Naive thymus-derived CD4-positive, alpha-beta T cell (primary cell): ENCODE measurements at regions of chr1 and their contacts with region 1.

Region 1: DNA sequence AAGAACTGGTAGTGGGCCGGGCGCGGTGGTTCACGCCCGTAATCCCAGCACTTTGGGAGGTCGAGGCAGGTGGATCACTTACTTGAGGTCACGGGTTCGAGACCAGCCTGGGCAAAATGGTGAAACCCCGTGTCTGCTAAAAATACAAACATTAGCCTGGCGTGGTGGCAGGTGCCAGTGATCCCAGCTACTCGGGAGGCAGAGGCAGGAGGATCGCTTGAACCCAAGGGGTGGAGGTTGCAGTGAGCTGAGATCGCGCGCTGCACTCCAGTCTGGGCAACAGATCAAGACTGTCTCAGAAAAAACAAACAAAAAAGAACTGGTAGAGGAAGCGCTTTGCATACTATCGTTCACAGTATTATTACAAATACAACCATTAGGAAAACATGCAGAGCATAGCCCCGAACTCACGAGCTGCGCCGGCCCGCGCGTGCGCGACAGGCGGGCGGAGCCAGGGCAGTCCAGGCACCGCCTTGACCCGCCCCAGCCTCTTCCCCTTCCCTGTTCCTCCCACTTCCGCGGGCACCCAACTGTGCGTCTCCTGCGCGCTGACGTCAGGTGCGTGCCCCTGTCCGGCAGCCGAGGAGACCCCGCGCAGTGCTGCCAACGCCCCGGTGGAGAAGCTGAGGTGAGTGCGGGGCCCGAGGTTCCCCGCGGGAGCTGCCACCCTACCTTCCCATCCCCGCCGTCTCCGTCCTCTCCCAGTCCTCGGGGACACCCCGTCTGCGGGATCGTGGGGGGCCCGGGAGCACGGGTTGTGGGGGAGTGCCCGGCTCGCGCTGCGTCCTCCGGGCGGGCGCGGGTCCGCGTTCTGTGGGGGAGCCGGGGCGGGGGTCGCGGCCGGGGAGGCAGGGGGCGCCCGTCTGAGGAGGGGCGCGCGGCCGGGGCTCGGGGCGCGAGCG is at the start of gene CDC42:
- DNase-seq: peak; percentile 95 to 99 (median 98)
- ATAC-seq: peak; percentile 96
- H3K4me3 ChIP-seq: peak within 1 kb of the TSS; percentile 74
- H3K4me3 Mint-ChIP-seq: peak within 1 kb of the TSS; percentile 96 to 100 (median 99)
- H3K27ac ChIP-seq: peak within 1 kb of the TSS; percentile 98
- H3K27ac Mint-ChIP-seq: peak within 1 kb of the TSS; percentile 91 to 100 (median 99)
- H3K4me1 ChIP-seq: peaks cover 38 to 45% of the 10 kb centered on the region in 2 donors
- H3K4me1 Mint-ChIP-seq: peaks cover 50 to 79% (median 61%) of the 10 kb centered on the region in 7 donors
- H3K27me3 ChIP-seq: no peaks in the 10 kb centered on the region
- H3K27me3 Mint-ChIP-seq: peaks cover 0 to 2% (median 0%) of the 10 kb centered on the region in 5 donors
- total RNA-seq, gene CDC42: 186 to 385 (median 305) TPM

Region 2: GRCh38 chr1:21801100-21801499 is 251.3 kb before region 1 on chr1:
- CTCF ChIA-PET with region 1: no interaction called
- POLR2A ChIA-PET with region 1: no interaction called
- intact Hi-C with region 1: no loop called
- DNase-seq: no peak
- ATAC-seq: no peak
- H3K4me3 ChIP-seq: no peak overlapping the region
- H3K4me3 Mint-ChIP-seq: no peak overlapping the region
- H3K27ac ChIP-seq: no peak overlapping the region
- H3K27ac Mint-ChIP-seq: no peak overlapping the region
- H3K4me1 ChIP-seq: no peaks in the 10 kb centered on the region
- H3K4me1 Mint-ChIP-seq: no peaks in the 10 kb centered on the region
- H3K27me3 ChIP-seq: no peaks in the 10 kb centered on the region
- H3K27me3 Mint-ChIP-seq: peaks cover 0 to 3% (median 0%) of the 10 kb centered on the region in 5 donors

Region 3: DNA sequence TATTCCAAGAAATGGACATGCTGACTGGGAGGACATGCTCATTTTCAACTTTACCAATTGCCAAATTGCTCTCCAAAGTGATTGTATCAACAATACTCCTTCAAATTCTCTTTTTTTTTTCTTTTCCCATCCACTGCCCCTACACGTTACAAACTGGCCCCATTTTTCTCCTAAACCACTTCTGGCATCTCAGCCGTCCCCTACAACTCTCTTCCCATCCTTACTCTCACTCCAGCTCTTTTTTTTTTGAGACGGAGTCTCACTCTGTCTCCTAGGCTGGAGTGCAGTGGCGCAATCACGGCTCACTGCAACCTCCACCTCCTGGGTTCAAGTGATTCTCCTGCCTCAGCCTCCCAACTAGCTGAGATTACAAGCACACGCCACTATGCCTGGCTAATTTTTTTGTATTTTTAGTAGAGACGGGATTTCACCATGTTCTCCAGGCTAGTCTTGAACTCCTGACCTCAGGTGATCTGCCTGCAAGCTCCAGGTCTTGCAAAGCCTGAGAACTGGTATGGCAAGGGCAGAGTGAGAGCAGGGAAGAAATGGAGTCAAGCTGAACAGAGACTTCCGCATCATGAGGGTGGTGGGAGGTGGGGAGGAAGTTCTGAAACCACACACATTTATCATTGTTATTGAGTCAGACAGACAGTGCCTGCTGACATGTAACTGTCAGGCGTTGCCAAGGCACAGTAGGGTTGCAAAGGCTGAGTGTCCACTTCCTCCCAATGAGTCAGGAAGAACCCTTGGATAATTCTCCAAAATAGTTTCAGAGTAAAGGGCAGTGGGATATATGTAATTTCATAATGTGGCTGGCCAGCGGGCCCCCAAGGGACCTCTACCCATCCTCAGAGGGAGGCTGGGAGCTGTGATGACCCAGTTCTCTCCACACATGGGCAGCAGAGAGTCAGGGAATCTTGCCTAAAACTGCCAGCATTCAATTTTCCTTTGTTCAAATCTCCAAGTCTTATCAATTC is 33.5 kb before region 1 on chr1:
- CTCF ChIA-PET with region 1: interaction called, 56 read pairs
- POLR2A ChIA-PET with region 1: interaction called, 774 read pairs
- intact Hi-C with region 1: loop called in 1 of 2 experiments (anchors 1 kb)
- DNase-seq: peak; percentile 31 to 86 (median 68)
- ATAC-seq: peak; percentile 96
- H3K4me3 ChIP-seq: no peak overlapping the region
- H3K4me3 Mint-ChIP-seq: peak overlapping the region; percentile 44 to 77 (median 66)
- H3K27ac ChIP-seq: peak overlapping the region; percentile 47
- H3K27ac Mint-ChIP-seq: peak overlapping the region; percentile 83 to 99 (median 95)
- H3K4me1 ChIP-seq: peaks cover 22 to 27% of the 10 kb centered on the region in 2 donors
- H3K4me1 Mint-ChIP-seq: peaks cover 20 to 32% (median 30%) of the 10 kb centered on the region in 7 donors
- H3K27me3 ChIP-seq: no peaks in the 10 kb centered on the region
- H3K27me3 Mint-ChIP-seq: peaks cover 0 to 3% (median 0%) of the 10 kb centered on the region in 5 donors

Region 4: DNA sequence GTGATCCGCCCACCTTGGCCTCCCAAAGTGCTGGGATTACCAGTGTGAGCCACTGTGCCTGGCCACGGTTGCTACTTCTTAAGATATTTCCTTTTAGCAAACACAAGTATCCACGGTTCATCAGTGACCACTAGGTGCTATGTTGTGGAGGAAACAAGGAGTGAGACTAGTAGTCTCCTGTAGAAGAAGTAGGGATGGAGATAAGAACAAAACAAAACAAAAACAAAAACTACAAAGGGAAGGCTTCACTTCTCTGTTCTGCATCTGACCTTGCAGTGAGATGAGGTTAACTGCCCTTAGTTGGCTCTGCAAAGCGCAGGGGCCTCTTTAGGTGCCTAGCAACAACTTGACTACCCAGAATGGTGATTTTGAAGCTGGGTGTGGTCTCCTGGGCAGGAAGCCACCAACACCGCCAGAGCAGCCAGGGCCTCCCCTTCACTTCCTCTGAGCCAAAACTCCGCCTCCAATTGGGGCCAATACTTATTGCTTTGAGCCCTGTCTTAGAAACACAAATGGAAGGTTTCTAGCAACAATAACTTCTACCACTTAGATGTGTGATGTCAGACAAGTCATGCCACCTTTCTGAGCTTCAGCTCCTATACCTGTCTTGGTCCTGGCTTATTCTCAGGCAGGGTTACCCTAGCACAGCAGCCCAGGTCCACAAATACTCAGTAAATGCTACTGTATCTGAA is 12.6 kb before region 1 on chr1:
- CTCF ChIA-PET with region 1: interaction called, 27 read pairs
- POLR2A ChIA-PET with region 1: interaction called, 774 read pairs
- intact Hi-C with region 1: loop called (anchors 1 kb)
- DNase-seq: peak; percentile 62 to 98 (median 97)
- ATAC-seq: peak; percentile 98
- H3K4me3 ChIP-seq: peak overlapping the region; percentile 25
- H3K4me3 Mint-ChIP-seq: peak overlapping the region; percentile 66 to 90 (median 81)
- H3K27ac ChIP-seq: peak overlapping the region; percentile 95
- H3K27ac Mint-ChIP-seq: peak overlapping the region; percentile 95 to 100 (median 99)
- H3K4me1 ChIP-seq: peaks cover 31 to 65% of the 10 kb centered on the region in 2 donors
- H3K4me1 Mint-ChIP-seq: peaks cover 35 to 77% (median 53%) of the 10 kb centered on the region in 7 donors
- H3K27me3 ChIP-seq: no peaks in the 10 kb centered on the region
- H3K27me3 Mint-ChIP-seq: no peaks in the 10 kb centered on the region

Region 5: DNA sequence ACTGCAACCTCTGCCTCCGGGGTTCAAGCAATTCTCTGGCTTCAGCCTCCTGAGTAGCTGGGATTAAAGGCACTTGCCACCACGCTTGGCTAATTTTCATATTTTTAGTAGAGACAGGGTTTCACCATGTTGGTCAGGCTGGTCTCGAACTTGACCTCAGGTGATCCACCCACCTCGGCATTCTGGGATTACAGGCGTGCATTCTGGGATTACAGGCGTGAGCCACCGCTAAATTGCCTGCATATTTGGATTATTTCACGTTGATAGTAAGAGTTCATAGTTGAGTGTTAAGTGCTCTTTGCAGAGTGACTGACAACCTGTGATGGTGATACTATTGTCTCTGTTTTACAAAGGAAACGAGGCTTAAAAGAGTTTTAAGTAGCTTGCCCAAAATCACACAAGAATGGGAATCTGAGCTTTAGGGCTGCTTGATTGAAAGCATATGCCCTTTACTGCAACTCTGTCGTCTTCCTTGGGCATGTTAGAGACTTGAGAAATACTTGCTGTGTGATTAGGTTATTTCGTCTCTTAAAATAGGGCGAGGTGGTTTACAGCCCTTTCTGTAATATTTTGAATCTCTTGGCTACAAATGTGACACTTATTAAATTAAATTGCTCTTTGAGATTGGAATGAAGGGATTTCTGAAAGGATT is 12.5 kb after region 1 on chr1:
- CTCF ChIA-PET with region 1: no interaction called
- POLR2A ChIA-PET with region 1: interaction called, 15 read pairs
- intact Hi-C with region 1: loop called in 1 of 2 experiments (anchors 2 kb)
- DNase-seq: no peak
- ATAC-seq: no peak
- H3K4me3 ChIP-seq: peak overlapping the region; percentile 11
- H3K4me3 Mint-ChIP-seq: peak overlapping the region in 9 of 10 donors; percentile 64 to 96 (median 74)
- H3K27ac ChIP-seq: peak overlapping the region; percentile 28
- H3K27ac Mint-ChIP-seq: peak overlapping the region in 7 of 9 donors; percentile 38 to 90 (median 64)
- H3K4me1 ChIP-seq: peaks cover 84 to 85% of the 10 kb centered on the region in 2 donors
- H3K4me1 Mint-ChIP-seq: peaks cover 72 to 93% (median 86%) of the 10 kb centered on the region in 7 donors
- H3K27me3 ChIP-seq: no peaks in the 10 kb centered on the region
- H3K27me3 Mint-ChIP-seq: no peaks in the 10 kb centered on the region

Region 6: GRCh38 chr1:22077728-22078127 is 25.4 kb after region 1 on chr1:
- CTCF ChIA-PET with region 1: no interaction called
- POLR2A ChIA-PET with region 1: interaction called, 28 read pairs
- intact Hi-C with region 1: no loop called
- DNase-seq: no peak
- ATAC-seq: no peak
- H3K4me3 ChIP-seq: no peak overlapping the region
- H3K4me3 Mint-ChIP-seq: peak overlapping the region in 8 of 10 donors; percentile 22 to 73 (median 64)
- H3K27ac ChIP-seq: peak overlapping the region; percentile 48
- H3K27ac Mint-ChIP-seq: peak overlapping the region in 8 of 9 donors; percentile 23 to 94 (median 74)
- H3K4me1 ChIP-seq: peaks cover 43 to 64% of the 10 kb centered on the region in 2 donors
- H3K4me1 Mint-ChIP-seq: peaks cover 69 to 99% (median 88%) of the 10 kb centered on the region in 7 donors
- H3K27me3 ChIP-seq: no peaks in the 10 kb centered on the region
- H3K27me3 Mint-ChIP-seq: no peaks in the 10 kb centered on the region

Region 7: DNA sequence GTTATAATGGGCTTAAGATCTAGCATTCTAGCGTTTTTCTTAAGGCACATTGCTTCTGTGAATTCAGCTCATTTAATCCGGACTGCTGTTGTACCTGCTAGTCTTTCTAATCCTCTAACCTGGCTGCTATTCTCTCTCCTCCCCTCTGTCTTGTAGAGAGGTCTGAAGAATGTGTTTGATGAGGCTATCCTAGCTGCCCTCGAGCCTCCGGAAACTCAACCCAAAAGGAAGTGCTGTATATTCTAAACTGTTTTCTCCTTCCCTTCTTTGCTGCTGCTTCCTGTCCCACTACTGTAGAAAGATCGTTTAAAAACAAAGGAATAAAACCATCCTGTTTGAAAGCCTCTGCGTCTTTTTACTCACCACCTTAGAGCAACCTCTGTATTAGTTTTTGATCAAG is 37.4 kb after region 1 on chr1:
- CTCF ChIA-PET with region 1: interaction called, 3 read pairs
- POLR2A ChIA-PET with region 1: interaction called, 13 read pairs
- intact Hi-C with region 1: loop called (anchors 2 to 5 kb)
- DNase-seq: peak in 5 of 9 donors; percentile 12 to 19 (median 16)
- ATAC-seq: peak; percentile 35
- H3K4me3 ChIP-seq: peak overlapping the region; percentile 16
- H3K4me3 Mint-ChIP-seq: peak overlapping the region; percentile 76 to 87 (median 78)
- H3K27ac ChIP-seq: peak overlapping the region; percentile 63
- H3K27ac Mint-ChIP-seq: peak overlapping the region; percentile 68 to 93 (median 78)
- H3K4me1 ChIP-seq: peaks cover 48 to 57% of the 10 kb centered on the region in 2 donors
- H3K4me1 Mint-ChIP-seq: peaks cover 69 to 97% (median 93%) of the 10 kb centered on the region in 7 donors
- H3K27me3 ChIP-seq: no peaks in the 10 kb centered on the region
- H3K27me3 Mint-ChIP-seq: no peaks in the 10 kb centered on the region

Region 8: DNA sequence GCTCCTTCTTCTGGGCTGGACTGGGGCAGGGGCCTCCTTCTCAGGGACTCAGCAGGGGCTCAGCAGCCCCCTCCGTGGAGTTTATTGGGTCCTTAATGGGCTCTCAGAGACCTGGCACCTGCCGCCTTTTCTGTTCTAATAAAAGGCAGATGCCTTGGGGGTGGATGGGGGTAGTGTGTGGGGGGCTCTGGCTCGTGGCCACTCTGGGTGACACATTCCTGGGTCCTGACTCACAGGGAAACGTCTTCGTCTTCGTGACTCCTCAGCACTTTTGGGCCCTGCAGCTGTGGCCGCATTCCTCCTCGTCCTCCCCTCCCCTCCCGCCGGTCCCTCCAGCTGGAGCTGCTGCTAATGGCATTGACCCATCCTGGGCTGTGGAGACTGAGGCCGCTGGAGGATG is 198.4 kb after region 1 on chr1:
- CTCF ChIA-PET with region 1: no interaction called
- POLR2A ChIA-PET with region 1: no interaction called
- intact Hi-C with region 1: no loop called
- DNase-seq: no peak
- ATAC-seq: no peak
- H3K4me3 ChIP-seq: no peak overlapping the region
- H3K4me3 Mint-ChIP-seq: no peak overlapping the region
- H3K27ac ChIP-seq: no peak overlapping the region
- H3K27ac Mint-ChIP-seq: no peak overlapping the region
- H3K4me1 ChIP-seq: no peaks in the 10 kb centered on the region
- H3K4me1 Mint-ChIP-seq: no peaks in the 10 kb centered on the region
- H3K27me3 ChIP-seq: no peaks in the 10 kb centered on the region
- H3K27me3 Mint-ChIP-seq: peaks cover 10 to 47% (median 23%) of the 10 kb centered on the region in 5 donors

Region 9: GRCh38 chr1:22451702-22452474 is 399.5 kb after region 1 on chr1 and contains the start of gene ZBTB40:
- CTCF ChIA-PET with region 1: no interaction called
- POLR2A ChIA-PET with region 1: no interaction called
- intact Hi-C with region 1: loop called in 1 of 2 experiments (anchors 1 kb)
- DNase-seq: peak; percentile 92 to 96 (median 94)
- ATAC-seq: peak; percentile 98
- H3K4me3 ChIP-seq: peak within 1 kb of the TSS; percentile 83
- H3K4me3 Mint-ChIP-seq: peak within 1 kb of the TSS; percentile 86 to 98 (median 92)
- H3K27ac ChIP-seq: peak within 1 kb of the TSS; percentile 85
- H3K27ac Mint-ChIP-seq: peak within 1 kb of the TSS; percentile 91 to 98 (median 95)
- H3K4me1 ChIP-seq: peaks cover 4 to 10% of the 10 kb centered on the region in 2 donors
- H3K4me1 Mint-ChIP-seq: peaks cover 11 to 52% (median 47%) of the 10 kb centered on the region in 7 donors
- H3K27me3 ChIP-seq: no peaks in the 10 kb centered on the region
- H3K27me3 Mint-ChIP-seq: peaks cover 0 to 4% (median 0%) of the 10 kb centered on the region in 5 donors
- total RNA-seq, gene ZBTB40: 23.1 to 60.6 (median 43.5) TPM